ENCODE measurements at regions of chr10 and their contacts with region 1.

Region 1: GRCh38 chr10:35642027-35642792 is at the start of gene FZD8:
- DNase-seq: peak; percentile 91 to 95
- H3K4me3 ChIP-seq: peak within 1 kb of the TSS; percentile 78 to 81
- H3K27ac ChIP-seq: peak within 1 kb of the TSS; percentile 86 to 94
- H3K4me1 ChIP-seq: peaks cover 0 to 38% (median 23%) of the 10 kb centered on the region in 4 donors
- H3K27me3 ChIP-seq: no peaks in the 10 kb centered on the region
- CTCF ChIP-seq: no peak

Region 2: DNA sequence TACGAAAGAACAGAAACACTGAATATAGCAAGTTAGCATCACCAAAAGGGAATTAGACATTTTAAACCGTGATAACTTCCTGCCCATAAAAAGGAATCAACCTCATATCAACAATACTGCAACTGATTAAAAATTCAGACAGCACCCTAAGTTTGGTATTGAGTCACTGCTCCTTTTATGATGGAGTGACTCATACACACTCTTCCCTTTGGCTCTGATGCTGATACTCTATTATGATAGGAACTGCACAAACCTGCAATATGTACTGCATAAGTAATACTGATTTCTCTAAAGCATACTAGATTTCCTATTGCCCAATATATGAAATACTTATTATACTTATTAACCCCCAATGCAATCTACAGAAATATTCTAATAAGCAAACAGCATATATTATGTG is 945.8 kb before region 1 on chr10:
- intact Hi-C with region 1: no loop called
- DNase-seq: no peak
- H3K4me3 ChIP-seq: no peak overlapping the region
- H3K27ac ChIP-seq: no peak overlapping the region
- H3K4me1 ChIP-seq: peaks cover 0 to 34% (median 15%) of the 10 kb centered on the region in 4 donors
- H3K27me3 ChIP-seq: no peaks in the 10 kb centered on the region
- CTCF ChIP-seq: no peak

Region 3: GRCh38 chr10:35700487-35700882 is 58.3 kb after region 1 on chr10:
- intact Hi-C with region 1: no loop called
- DNase-seq: no peak
- H3K4me3 ChIP-seq: no peak overlapping the region
- H3K27ac ChIP-seq: no peak overlapping the region
- H3K4me1 ChIP-seq: no peaks in the 10 kb centered on the region
- H3K27me3 ChIP-seq: no peaks in the 10 kb centered on the region
- CTCF ChIP-seq: no peak

Region 4: DNA sequence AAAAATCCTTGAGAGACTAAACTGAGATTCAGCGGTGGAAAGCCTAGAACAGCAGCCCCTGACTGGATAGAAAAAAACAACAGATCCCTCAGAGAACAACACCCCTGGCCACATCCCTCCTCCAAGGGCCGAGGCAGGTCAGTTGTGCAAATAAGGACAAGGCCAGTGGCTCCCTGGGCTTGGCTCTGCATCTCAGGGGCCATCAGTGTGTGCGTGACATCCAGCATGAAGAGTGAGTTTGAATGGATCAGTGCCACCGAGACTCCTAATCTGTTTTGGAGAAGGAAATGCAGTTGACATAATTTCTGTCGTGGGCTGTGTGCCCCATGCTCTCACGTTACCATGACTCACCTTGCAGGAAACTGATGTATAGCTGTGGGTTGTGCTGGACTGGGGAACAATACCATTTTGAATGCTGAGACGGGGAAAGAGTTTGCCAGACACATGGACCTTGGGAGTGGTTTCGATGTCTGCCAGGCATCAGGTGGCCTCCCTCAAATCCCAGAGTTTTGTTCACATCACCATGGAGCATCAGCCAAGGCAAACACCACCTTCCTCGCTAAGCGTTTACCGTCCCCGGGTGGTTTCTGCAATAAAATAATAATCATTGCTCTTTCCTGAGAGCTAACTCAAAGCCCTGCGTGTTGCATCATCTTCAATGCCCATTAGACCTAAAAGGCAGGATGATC is 153.1 kb after region 1 on chr10:
- intact Hi-C with region 1: loop called (anchors 10 kb)
- DNase-seq: peak; percentile 42 to 83
- H3K4me3 ChIP-seq: no peak overlapping the region
- H3K27ac ChIP-seq: peak overlapping the region; percentile 67 to 72
- H3K4me1 ChIP-seq: peaks cover 0 to 36% (median 7%) of the 10 kb centered on the region in 4 donors
- H3K27me3 ChIP-seq: no peaks in the 10 kb centered on the region
- CTCF ChIP-seq: no peak